Activated CD8-positive, alpha-beta T cell treated with anti-CD3 and anti-CD28 coated beads for 36 hours (primary cell): ENCODE measurements at regions of chr6 and their contacts with region 1.

Region 1: GRCh38 chr6:158242071-158242606 is 70.1 kb upstream of the TULP4 start:
- DNase-seq: no peak
- ATAC-seq: no peak
- H3K4me3 Mint-ChIP-seq: no peak overlapping the region
- H3K27ac Mint-ChIP-seq: peak overlapping the region; percentile 36
- H3K4me1 Mint-ChIP-seq: peaks cover 21% of the 10 kb centered on the region
- H3K27me3 Mint-ChIP-seq: no peaks in the 10 kb centered on the region
- CTCF ChIP-seq: no peak

Region 2: GRCh38 chr6:157726892-157727628 is 515.1 kb before region 1 on chr6:
- CTCF ChIA-PET with region 1: no interaction called
- POLR2A ChIA-PET with region 1: no interaction called
- intact Hi-C with region 1: no loop called
- DNase-seq: no peak
- ATAC-seq: no peak
- H3K4me3 Mint-ChIP-seq: no peak overlapping the region
- H3K27ac Mint-ChIP-seq: no peak overlapping the region
- H3K4me1 Mint-ChIP-seq: no peaks in the 10 kb centered on the region
- H3K27me3 Mint-ChIP-seq: no peaks in the 10 kb centered on the region
- CTCF ChIP-seq: no peak

Region 3: DNA sequence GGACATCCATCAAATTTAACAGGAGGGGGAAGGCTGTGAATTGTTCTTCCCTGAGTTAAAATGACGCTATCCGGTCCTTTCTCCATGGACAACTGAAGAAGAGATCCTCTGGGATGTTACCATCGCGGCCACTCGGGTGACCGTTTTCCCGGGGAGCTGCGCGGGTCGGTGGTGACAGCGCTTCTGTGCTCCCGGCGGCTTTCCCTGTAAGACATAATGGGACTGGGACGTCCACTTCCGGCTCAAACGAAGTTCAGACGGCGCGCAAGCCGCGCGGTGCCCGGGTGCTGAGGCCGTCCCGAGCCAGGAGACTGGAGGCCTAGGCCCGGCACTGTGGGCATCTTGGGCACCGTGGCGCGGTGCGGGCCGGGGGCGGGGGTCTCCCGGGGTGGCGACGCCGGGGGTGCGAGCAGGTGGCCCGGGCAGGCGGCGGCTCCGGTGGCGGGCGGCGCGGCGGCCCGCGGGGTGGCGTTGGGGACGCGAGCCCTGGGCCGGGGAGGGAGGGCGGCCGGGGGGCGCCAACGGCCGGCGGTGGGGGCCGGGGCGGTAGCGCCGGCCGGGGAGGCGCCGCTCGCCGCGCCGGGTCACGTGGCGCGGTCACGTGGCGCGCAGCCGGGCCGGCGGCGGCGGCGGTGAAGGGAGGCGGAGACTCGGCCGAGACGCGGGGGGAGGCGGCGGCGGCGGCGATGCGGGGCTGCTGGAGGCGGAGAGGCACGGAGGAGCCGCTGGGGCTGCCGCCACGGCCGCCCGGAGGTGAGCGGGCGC is 10.4 kb before region 1 on chr6:
- CTCF ChIA-PET with region 1: interaction called, 4 read pairs
- POLR2A ChIA-PET with region 1: interaction called, 10 read pairs
- intact Hi-C with region 1: no loop called
- DNase-seq: peak; percentile 68
- ATAC-seq: peak; percentile 77
- H3K4me3 Mint-ChIP-seq: peak overlapping the region; percentile 86
- H3K27ac Mint-ChIP-seq: peak overlapping the region; percentile 85
- H3K4me1 Mint-ChIP-seq: peaks cover 30% of the 10 kb centered on the region
- H3K27me3 Mint-ChIP-seq: no peaks in the 10 kb centered on the region
- CTCF ChIP-seq: no peak